Activated CD4-positive, alpha-beta T cell treated with anti-CD3 and anti-CD28 coated beads for 36 hours (primary cell): ENCODE measurements at regions of chr20 and their contacts with region 1.

Region 1: GRCh38 chr20:20498076-20498861 is 130.4 kb downstream of the INSM1 start:
- DNase-seq: no peak
- ATAC-seq: no peak
- H3K4me3 Mint-ChIP-seq: no peak overlapping the region
- H3K27ac Mint-ChIP-seq: peak overlapping the region; percentile 86
- H3K4me1 Mint-ChIP-seq: peaks cover 62% of the 10 kb centered on the region
- H3K27me3 Mint-ChIP-seq: no peaks in the 10 kb centered on the region

Region 2: DNA sequence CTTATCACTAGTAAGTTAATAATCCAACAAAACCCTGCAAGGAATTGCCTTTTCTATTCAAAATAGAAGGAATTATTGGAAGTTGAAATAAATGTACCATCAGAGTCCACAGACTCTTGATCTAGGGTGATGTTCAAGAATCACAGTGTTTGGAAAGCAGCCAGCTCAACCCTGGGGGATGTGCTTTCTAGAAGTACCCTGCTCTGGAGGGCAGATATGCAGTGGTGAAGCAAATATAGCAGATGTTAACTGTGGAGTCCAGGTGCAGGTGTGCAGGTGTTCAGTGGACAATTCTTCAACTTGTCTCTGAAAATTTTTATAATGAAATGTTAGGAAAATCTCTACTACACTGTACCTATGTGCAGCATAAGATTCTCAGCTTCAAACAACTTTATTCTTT is 139.5 kb before region 1 on chr20:
- CTCF ChIA-PET with region 1: no interaction called
- POLR2A ChIA-PET with region 1: no interaction called
- intact Hi-C with region 1: no loop called
- DNase-seq: no peak
- ATAC-seq: no peak
- H3K4me3 Mint-ChIP-seq: no peak overlapping the region
- H3K27ac Mint-ChIP-seq: no peak overlapping the region
- H3K4me1 Mint-ChIP-seq: peaks cover 20% of the 10 kb centered on the region
- H3K27me3 Mint-ChIP-seq: peaks cover 42% of the 10 kb centered on the region

Region 3: DNA sequence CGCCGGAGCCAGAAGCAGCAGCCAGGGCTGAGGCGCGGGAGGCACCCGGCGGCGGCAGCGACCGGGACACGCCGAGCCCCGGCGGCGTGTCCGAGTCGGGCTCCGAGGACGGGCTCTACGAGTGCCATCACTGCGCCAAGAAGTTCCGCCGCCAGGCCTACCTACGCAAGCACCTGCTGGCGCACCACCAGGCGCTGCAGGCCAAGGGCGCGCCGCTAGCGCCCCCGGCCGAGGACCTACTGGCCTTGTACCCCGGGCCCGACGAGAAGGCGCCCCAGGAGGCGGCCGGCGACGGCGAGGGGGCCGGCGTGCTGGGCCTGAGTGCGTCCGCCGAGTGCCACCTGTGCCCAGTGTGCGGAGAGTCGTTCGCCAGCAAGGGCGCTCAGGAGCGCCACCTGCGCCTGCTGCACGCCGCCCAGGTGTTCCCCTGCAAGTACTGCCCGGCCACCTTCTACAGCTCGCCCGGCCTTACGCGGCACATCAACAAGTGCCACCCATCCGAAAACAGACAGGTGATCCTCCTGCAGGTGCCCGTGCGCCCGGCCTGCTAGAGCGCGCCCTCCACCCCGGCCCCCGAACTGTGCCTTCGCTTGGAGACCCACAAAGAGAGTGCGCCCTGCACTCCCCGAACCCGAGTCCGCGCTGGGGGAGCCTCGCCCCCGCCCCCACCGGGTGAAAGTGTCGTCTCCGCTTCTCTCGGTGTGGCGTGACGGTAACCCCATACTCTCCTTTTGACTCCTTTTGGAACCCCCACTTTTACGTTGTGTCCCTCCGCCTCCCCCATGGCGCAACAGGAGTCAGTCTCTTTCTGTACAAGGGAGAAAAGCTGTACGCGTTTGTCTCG is 128.8 kb before region 1 on chr20:
- CTCF ChIA-PET with region 1: interaction called, 3 read pairs
- POLR2A ChIA-PET with region 1: interaction called, 3 read pairs
- intact Hi-C with region 1: loop called in 1 of 2 experiments (anchors 2 kb)
- DNase-seq: peak; percentile 59
- ATAC-seq: peak; percentile 10
- H3K4me3 Mint-ChIP-seq: peak overlapping the region; percentile 77
- H3K27ac Mint-ChIP-seq: peak overlapping the region; percentile 64
- H3K4me1 Mint-ChIP-seq: peaks cover 24% of the 10 kb centered on the region
- H3K27me3 Mint-ChIP-seq: peaks cover 56% of the 10 kb centered on the region

Region 4: GRCh38 chr20:20425823-20426654 is 72.2 kb before region 1 on chr20:
- CTCF ChIA-PET with region 1: interaction called, 4 read pairs
- POLR2A ChIA-PET with region 1: no interaction called
- intact Hi-C with region 1: loop called in 1 of 2 experiments (anchors 2 kb)
- DNase-seq: peak; percentile 22
- ATAC-seq: peak; percentile 82
- H3K4me3 Mint-ChIP-seq: no peak overlapping the region
- H3K27ac Mint-ChIP-seq: peak overlapping the region; percentile 58
- H3K4me1 Mint-ChIP-seq: peaks cover 38% of the 10 kb centered on the region
- H3K27me3 Mint-ChIP-seq: no peaks in the 10 kb centered on the region

Region 5: GRCh38 chr20:20480689-20481088 is 17.6 kb before region 1 on chr20:
- CTCF ChIA-PET with region 1: no interaction called
- POLR2A ChIA-PET with region 1: no interaction called
- intact Hi-C with region 1: loop called in 1 of 2 experiments (anchors 2 kb)
- DNase-seq: no peak
- ATAC-seq: peak; percentile 85
- H3K4me3 Mint-ChIP-seq: no peak overlapping the region
- H3K27ac Mint-ChIP-seq: peak overlapping the region; percentile 28
- H3K4me1 Mint-ChIP-seq: peaks cover 42% of the 10 kb centered on the region
- H3K27me3 Mint-ChIP-seq: no peaks in the 10 kb centered on the region

Region 6: DNA sequence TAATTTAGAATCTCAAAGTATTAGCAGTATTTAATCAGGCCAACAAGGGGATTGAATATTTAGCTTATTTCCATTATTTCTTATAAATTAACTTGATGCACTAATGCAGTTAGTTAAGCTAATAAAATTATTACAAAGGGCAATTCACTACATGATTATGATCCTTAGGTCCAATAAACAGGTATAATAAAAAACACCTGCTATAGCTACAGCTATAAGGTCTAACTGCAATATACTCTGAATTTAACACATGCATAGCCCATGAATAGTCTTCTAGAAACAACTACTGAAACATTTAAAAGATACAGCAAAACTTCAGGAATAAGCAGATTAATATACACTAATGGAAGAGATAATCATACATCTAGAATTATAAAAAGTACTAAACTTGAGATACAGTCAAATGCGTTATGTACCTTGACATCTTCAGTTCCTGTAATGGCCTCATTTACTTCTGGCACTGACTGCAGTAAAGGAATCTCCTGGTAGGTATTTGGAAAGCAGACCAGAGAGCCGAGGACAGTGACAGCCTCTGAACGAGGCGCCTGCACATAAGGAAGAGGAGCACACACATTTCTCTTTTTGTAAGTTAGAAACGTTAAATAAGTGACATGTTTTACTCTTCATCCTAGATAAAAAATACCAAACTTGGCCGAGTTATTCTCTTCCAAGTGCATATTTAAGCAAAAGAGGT is 38.1 kb after region 1 on chr20:
- CTCF ChIA-PET with region 1: no interaction called
- POLR2A ChIA-PET with region 1: no interaction called
- intact Hi-C with region 1: no loop called
- DNase-seq: no peak
- ATAC-seq: no peak
- H3K4me3 Mint-ChIP-seq: no peak overlapping the region
- H3K27ac Mint-ChIP-seq: no peak overlapping the region
- H3K4me1 Mint-ChIP-seq: no peaks in the 10 kb centered on the region
- H3K27me3 Mint-ChIP-seq: no peaks in the 10 kb centered on the region

Region 7: DNA sequence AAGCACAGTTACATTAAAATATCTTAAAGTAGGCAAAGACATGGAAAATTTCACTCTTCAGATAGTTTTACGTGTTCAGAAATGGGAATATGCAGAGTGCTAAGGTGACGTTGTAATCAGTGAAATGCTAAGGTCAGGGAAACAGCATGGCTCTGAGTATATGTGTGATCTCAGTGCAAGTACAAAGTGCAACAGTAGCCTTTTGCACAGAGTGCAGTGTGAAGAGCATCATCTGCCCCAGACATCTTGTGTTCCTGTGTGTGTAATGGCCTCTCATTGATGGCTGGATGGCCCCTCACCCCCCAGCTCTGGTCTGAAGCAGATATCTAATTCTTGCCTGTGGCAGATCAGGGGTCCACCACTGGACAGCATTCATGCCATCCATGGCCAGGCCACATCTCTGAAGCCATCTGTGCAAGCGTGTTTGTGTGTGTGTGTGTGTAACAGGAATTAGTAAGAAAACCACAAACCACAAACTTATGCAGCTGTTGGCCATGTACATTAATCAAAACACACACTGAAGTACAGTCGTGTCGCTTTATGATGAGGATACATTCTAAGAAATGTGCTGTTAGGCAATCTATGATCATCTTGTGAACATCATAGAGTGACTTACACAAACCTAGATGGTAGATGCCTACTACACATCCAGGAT is 49.1 kb after region 1 on chr20:
- CTCF ChIA-PET with region 1: no interaction called
- POLR2A ChIA-PET with region 1: interaction called, 3 read pairs
- intact Hi-C with region 1: loop called (anchors 2 kb)
- DNase-seq: peak; percentile 14
- ATAC-seq: peak; percentile 68
- H3K4me3 Mint-ChIP-seq: no peak overlapping the region
- H3K27ac Mint-ChIP-seq: no peak overlapping the region
- H3K4me1 Mint-ChIP-seq: peaks cover 36% of the 10 kb centered on the region
- H3K27me3 Mint-ChIP-seq: no peaks in the 10 kb centered on the region

Region 8: GRCh38 chr20:20743511-20744169 is 245.4 kb after region 1 on chr20:
- CTCF ChIA-PET with region 1: no interaction called
- POLR2A ChIA-PET with region 1: no interaction called
- intact Hi-C with region 1: no loop called
- DNase-seq: no peak
- ATAC-seq: no peak
- H3K4me3 Mint-ChIP-seq: no peak overlapping the region
- H3K27ac Mint-ChIP-seq: no peak overlapping the region
- H3K4me1 Mint-ChIP-seq: no peaks in the 10 kb centered on the region
- H3K27me3 Mint-ChIP-seq: peaks cover 9% of the 10 kb centered on the region